ENCODE measurements at regions of chr9 and their contacts with region 1.

Region 1: GRCh38 chr9:79571309-79572031 is at the start of gene TLE4:
- DNase-seq: peak; percentile 93 to 100
- ATAC-seq: peak; percentile 83 to 92
- H3K4me3 ChIP-seq: peak within 1 kb of the TSS; percentile 94
- H3K27ac ChIP-seq: peak within 1 kb of the TSS; percentile 87 to 92
- H3K4me1 ChIP-seq: peaks cover 8% of the 10 kb centered on the region; the same call in 2 of the 3 replicates
- CTCF ChIP-seq: no peak
- EP300 ChIP-seq: no peak
- POLR2A ChIP-seq: peak; percentile 64
- RAD21 ChIP-seq: no peak
- polyA plus RNA-seq, gene TLE4: 18.3 and 23.1 TPM in 2 replicates

Region 2: DNA sequence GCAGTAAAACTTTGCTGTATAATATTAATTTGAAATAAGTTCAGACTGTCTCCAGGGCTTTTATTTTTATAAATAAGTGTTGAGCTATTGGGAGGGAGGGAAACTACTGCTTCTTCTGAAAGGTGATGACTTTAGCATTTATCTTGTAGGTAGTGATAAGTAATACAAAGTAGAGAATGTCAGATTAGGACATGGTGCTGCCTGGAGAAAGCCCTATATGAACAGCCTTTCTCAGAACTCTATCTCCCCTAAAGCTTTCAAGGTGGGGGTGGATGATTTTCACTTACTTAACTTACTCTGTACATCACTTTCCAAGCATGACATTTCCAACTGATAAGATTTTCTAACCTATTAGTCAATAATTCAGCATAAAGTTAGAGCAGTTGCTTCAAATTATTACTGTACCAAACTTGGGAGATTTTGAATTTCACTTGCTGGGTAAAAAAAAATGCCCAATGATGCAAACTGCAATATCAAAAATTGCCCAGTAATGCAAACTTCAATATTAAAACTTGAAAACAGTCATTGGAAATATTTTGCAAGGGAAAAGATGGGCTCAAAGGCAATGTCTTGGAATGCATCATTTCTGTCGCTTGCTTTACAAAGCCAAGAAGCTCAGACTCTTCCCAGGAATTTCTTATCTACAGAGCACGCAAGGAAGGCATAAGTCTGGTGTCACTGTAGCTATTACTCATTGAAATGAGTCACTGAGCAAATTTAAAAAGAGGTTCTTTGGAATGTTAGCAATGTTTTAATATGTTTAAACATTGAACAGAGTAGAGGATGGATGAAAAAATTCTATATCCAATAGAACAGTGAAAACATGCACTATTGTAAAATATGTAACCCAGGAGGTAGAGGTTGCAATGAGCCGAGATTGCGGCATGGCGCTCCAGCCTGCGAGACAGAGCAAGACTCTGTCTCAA is 705.0 kb before region 1 on chr9:
- CTCF ChIA-PET with region 1: interaction called, 3 read pairs
- POLR2A ChIA-PET with region 1: interaction called, 14 read pairs
- DNase-seq: peak; percentile 74 to 97
- ATAC-seq: peak; percentile 94 to 95
- H3K4me3 ChIP-seq: no peak overlapping the region
- H3K27ac ChIP-seq: peak overlapping the region; percentile 90 to 93
- H3K4me1 ChIP-seq: peaks cover 34% of the 10 kb centered on the region
- CTCF ChIP-seq: 0 out of 3 replicates have a peak, but pooled peaks have one; percentile 23
- EP300 ChIP-seq: peak; percentile 99
- POLR2A ChIP-seq: no peak
- RAD21 ChIP-seq: peak; percentile 54 to 78

Region 3: DNA sequence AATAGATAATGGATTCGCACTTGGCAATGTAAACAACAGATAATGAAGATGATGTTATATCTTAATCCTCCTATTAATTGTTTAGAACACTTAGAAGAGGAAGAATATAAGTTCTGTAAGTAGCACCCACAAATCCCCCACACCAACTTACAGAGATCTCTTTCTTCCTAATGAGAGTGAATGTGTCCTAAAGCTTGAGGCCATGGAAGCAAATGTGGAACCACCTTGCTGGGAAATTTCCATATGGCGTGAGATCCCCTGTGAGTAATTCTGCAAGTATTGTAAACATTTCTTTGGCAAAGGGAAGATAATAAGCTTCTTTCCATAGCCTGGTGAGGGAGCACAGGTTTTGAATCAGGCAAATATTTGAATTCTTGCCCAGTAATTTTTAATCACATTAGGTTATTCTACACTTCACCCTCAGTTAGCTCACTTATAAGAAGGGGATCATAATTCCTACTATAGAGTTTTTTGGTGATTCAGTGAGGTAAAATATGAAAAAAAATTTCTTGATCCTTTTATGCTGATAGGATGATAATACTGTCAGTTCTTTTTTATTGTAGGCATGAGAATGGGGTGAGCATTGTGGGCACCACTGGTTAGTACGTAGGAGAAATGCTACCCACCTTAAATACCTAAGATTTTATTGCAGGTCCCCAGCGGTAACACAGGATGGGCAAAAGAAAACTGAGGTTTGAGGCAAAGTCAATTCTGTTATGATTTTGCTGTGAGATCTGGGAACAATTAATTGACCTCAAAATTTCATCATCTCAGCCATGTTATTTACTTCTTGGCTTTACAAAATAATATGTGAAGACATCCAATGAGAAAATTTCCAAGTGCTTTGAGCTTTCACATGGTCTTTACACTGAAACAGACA is 699.8 kb before region 1 on chr9:
- CTCF ChIA-PET with region 1: interaction called, 3 read pairs
- POLR2A ChIA-PET with region 1: interaction called, 14 read pairs
- DNase-seq: peak; percentile 45 to 96
- ATAC-seq: peak; percentile 83 to 90
- H3K4me3 ChIP-seq: no peak overlapping the region
- H3K27ac ChIP-seq: peak overlapping the region; percentile 82 to 94
- H3K4me1 ChIP-seq: peaks cover 28% of the 10 kb centered on the region
- CTCF ChIP-seq: no peak
- EP300 ChIP-seq: peak; percentile 89 to 95; a peak in 4 of 5 replicates
- POLR2A ChIP-seq: no peak
- RAD21 ChIP-seq: peak in 1 of 2 experiments; percentile 68

Region 4: DNA sequence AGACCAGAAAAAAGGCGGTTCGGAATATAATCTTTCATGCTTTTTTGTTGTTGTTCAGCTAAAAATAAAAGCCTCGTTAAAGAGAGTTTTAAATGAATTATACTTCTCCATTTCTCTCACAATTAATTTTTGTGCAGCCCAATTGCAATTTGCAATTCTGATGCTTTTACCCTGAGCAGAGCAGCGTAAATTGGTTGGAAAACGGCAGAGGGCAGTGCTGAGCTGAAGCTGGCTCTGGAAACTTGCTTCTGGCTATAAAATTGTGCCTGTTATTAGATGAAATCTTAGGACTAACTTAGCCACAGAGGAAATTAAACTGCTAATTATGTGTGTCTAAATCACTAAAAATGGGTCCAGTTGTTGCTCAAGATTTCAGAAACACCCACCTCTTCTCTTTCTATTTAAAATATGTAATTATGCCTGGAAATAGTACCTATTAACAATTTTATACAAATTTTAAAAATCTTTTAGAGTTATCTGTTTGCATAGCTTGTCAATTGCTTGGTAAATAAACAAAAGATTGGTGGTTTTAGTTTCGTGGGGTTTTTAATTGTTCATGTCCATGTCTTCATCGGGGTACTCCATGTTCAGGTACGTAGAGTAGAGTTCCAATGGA is 441.5 kb before region 1 on chr9:
- CTCF ChIA-PET with region 1: interaction called, 5 read pairs
- POLR2A ChIA-PET with region 1: interaction called, 11 read pairs
- DNase-seq: peak; percentile 26 to 61
- ATAC-seq: peak; percentile 59 to 81; a peak in 3 of 6 replicates
- H3K4me3 ChIP-seq: no peak overlapping the region
- H3K27ac ChIP-seq: peak overlapping the region in 1 of 2 experiments; percentile 39; a peak in 1 of 6 replicates
- H3K4me1 ChIP-seq: no peaks in the 10 kb centered on the region
- CTCF ChIP-seq: peak; percentile 86
- EP300 ChIP-seq: no peak
- POLR2A ChIP-seq: no peak
- RAD21 ChIP-seq: peak; percentile 89

Measured in A549 (cell line).